ENCODE measurements at regions of chr5 and their contacts with region 1.

Region 1: DNA sequence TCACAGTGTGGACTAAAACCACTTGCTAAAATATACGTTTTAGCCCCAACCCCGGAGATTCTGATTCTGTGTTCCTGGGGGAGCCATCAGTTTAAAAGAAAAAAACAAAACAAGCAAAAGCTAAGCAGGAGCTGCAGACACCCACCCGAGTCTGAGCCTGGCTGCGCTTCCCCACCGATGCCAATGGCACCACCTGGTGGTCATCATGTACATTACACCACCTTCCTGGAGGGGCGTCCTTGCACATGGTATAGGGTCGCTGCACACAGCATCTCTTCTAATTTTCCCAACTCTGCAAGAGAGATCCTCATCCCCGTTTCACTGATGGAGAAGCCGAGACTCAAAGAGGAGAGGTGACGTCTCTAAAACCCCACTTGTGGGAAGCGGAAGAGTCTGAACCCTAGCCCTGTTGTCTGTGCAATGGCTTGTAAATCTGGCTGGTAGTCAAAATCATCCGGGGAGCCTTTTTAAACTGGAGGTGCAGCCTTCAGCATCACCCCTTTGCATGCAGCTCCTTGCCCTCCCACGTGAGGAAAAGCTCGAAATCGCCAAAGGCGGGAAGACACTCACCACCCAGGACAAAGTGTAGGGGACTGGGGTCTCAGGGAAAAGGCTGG is 23.1 kb upstream of the CNOT6 start:
- DNase-seq: peak; percentile 66
- ATAC-seq: peak; percentile 94
- H3K4me3 Mint-ChIP-seq: no peak overlapping the region
- H3K27ac Mint-ChIP-seq: no peak overlapping the region
- H3K4me1 Mint-ChIP-seq: no peaks in the 10 kb centered on the region
- H3K27me3 Mint-ChIP-seq: peaks cover 10% of the 10 kb centered on the region
- CTCF ChIP-seq: peak; percentile 94

Region 2: DNA sequence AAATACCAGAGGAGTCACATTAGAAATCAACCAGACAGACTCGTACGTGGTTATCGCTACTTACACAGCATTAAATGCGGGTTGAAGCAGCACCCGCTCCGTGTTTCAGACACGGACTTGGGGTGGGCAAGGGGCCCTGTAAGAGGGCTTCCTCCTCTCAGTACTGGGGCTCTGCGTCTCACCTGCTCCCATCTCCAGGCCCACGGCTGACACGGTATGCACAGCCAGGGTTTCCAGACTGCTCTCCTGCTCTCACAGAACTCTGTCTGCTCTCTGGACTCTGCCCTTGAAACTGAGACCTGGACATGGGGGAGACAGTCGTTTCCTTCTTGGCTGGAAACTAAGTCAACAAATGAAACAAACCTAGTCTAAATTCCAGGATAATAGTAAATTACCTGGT is 237.3 kb before region 1 on chr5:
- CTCF ChIA-PET with region 1: no interaction called
- POLR2A ChIA-PET with region 1: no interaction called
- intact Hi-C with region 1: loop called (anchors 5 kb)
- DNase-seq: no peak
- ATAC-seq: no peak
- H3K4me3 Mint-ChIP-seq: no peak overlapping the region
- H3K27ac Mint-ChIP-seq: no peak overlapping the region
- H3K4me1 Mint-ChIP-seq: no peaks in the 10 kb centered on the region
- H3K27me3 Mint-ChIP-seq: no peaks in the 10 kb centered on the region
- CTCF ChIP-seq: no peak

Region 3: DNA sequence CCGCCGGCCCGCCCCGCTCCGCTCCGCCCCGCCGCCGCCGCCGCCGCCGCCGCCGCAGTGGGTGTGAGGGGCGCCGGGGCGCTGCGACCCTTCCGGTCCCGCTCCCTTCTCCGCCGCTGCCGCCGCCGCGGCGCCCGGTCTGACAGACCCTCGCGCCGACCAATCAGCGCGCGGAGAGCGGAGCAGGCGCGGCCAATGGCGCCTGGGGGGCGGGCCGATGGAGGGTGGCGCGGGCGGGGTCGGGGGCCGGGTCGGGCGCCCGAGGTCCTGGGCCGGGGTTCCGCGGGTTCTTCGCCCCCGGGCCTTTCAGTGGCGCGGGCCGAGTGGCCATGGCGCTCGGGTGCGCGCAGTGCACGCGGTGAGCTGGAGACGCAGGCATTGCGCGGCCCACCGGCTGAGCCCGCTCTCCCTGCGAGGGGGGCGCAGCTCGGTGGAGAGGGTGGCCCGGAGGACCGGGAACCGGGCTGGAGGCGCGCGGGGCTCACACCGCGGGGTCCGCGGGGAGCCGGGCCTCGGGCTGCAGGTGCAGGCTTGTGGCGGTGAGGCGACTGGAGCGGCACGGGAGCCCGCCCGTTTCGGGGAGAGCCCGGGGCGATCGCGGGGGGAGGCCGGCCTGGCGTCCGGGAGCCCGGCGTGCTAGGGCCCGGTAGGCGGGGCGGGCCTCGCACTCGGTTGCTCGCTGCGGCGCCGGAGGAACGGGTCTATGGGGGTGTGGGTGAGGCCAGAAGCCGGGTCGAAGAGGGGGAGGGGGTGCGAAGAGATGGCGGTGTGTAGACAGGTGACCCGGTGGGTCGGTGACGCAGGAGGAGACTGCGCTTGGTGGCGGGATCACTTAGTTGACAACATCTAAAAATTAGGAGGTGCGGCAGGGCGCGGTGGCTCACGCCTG is 178.9 kb before region 1 on chr5 and contains the start of gene MAPK9:
- CTCF ChIA-PET with region 1: interaction called, 30 read pairs
- POLR2A ChIA-PET with region 1: no interaction called
- intact Hi-C with region 1: loop called (anchors 5 kb)
- DNase-seq: peak; percentile 88
- ATAC-seq: peak; percentile 82
- H3K4me3 Mint-ChIP-seq: peak within 1 kb of the TSS; percentile 82
- H3K27ac Mint-ChIP-seq: peak within 1 kb of the TSS; percentile 86
- H3K4me1 Mint-ChIP-seq: peaks cover 37% of the 10 kb centered on the region
- H3K27me3 Mint-ChIP-seq: no peaks in the 10 kb centered on the region
- CTCF ChIP-seq: no peak
- total RNA-seq, gene MAPK9: 31.8 to 33.2 TPM

Region 4: GRCh38 chr5:180328296-180329137 is 142.6 kb before region 1 on chr5:
- CTCF ChIA-PET with region 1: interaction called, 11 read pairs
- POLR2A ChIA-PET with region 1: no interaction called
- intact Hi-C with region 1: no loop called
- DNase-seq: peak; percentile 94
- ATAC-seq: peak; percentile 96
- H3K4me3 Mint-ChIP-seq: no peak overlapping the region
- H3K27ac Mint-ChIP-seq: no peak overlapping the region
- H3K4me1 Mint-ChIP-seq: peaks cover 2% of the 10 kb centered on the region
- H3K27me3 Mint-ChIP-seq: peaks cover 9% of the 10 kb centered on the region
- CTCF ChIP-seq: peak; percentile 88

Region 5: GRCh38 chr5:180460834-180461233 is 10.2 kb before region 1 on chr5:
- CTCF ChIA-PET with region 1: interaction called, 12 read pairs
- POLR2A ChIA-PET with region 1: no interaction called
- intact Hi-C with region 1: no loop called
- DNase-seq: no peak
- ATAC-seq: no peak
- H3K4me3 Mint-ChIP-seq: no peak overlapping the region
- H3K27ac Mint-ChIP-seq: no peak overlapping the region
- H3K4me1 Mint-ChIP-seq: peaks cover 2% of the 10 kb centered on the region
- H3K27me3 Mint-ChIP-seq: no peaks in the 10 kb centered on the region
- CTCF ChIP-seq: no peak

Region 6: DNA sequence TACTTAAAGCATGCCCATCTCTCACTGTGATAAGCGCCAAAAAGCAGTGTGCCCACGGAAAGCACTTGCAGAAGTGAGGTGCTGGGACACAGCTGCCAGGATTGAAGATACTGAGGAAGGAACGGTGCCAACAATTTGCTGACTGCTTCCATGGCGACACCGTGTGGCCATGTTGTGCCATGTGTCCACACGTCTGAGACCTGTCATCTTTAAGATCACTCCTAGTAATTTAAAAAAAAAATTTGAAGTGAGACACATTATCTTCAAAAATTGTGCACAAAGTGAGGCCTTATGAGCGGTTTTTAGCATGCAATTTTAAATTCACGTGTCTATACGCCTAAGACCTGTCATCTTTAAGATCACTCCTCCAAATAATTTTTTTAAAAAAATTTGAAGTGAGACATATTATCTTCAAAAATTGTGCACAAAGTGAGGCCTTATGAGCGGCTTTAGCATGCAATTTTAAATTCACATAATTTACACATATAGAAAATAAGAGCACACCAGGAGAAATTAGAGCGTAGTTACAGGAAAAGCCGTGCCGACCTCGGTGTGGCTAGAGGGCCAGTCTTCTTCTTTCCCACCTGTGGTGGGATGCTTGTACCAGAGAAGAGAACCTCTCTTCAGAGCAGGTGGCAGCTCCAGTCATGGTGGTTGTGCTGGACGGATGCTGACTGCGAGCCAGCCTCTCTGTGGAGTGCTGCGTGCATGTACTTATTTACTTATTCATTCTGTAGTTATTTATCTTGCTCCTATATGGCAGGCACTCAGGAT is 199.7 kb after region 1 on chr5:
- CTCF ChIA-PET with region 1: no interaction called
- POLR2A ChIA-PET with region 1: no interaction called
- intact Hi-C with region 1: no loop called
- DNase-seq: peak; percentile 77
- ATAC-seq: peak; percentile 76
- H3K4me3 Mint-ChIP-seq: no peak overlapping the region
- H3K27ac Mint-ChIP-seq: no peak overlapping the region
- H3K4me1 Mint-ChIP-seq: peaks cover 10% of the 10 kb centered on the region
- H3K27me3 Mint-ChIP-seq: peaks cover 8% of the 10 kb centered on the region
- CTCF ChIP-seq: peak; percentile 74

Region 7: GRCh38 chr5:180875860-180876426 is 404.9 kb after region 1 on chr5:
- CTCF ChIA-PET with region 1: no interaction called
- POLR2A ChIA-PET with region 1: no interaction called
- intact Hi-C with region 1: no loop called
- DNase-seq: no peak
- ATAC-seq: no peak
- H3K4me3 Mint-ChIP-seq: no peak overlapping the region
- H3K27ac Mint-ChIP-seq: no peak overlapping the region
- H3K4me1 Mint-ChIP-seq: peaks cover 3% of the 10 kb centered on the region
- H3K27me3 Mint-ChIP-seq: peaks cover 2% of the 10 kb centered on the region
- CTCF ChIP-seq: no peak